Common myeloid progenitor, CD34-positive (primary cell): ENCODE measurements at regions of chr17 and their contacts with region 1.

Region 1: DNA sequence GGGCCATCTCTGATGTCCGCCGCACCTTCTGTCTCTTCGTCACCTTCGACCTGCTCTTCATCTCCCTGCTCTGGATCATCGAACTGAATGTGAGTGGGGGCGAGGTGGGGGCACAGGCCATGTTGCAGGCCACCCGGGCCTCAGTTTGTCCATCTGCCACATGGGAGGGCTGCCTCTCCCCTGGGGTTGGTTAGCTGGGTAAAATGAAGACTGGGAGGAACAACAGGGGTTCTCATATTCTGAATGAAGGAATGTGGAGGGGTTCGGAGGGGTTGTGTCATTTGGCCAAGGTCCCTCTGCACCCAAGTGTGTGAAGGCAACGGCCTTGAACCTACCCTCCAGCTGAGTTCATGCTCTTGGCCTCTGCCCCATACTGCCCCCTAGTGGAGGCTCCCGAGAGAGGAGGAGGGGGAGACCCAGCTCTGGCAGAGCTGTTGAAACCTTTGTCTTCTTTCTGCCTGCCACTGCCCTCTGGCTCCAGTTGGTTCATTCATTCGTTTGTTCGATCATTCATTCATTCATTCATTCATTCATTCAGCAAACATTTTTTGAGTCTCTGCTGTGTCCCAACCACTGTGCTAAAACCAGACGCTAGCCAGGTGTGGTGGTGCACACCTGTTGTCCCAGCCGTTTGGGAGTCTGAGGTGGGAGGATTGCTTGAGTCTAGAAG is 11.4 kb upstream of the TCAP start:
- DNase-seq: peak; percentile 63 to 78 (median 70)
- H3K4me3 ChIP-seq: no peak overlapping the region
- H3K27ac ChIP-seq: no peak overlapping the region
- H3K4me1 ChIP-seq: peaks cover 0 to 28% (median 16%) of the 10 kb centered on the region in 4 experiments
- H3K27me3 ChIP-seq: no peaks in the 10 kb centered on the region

Region 2: GRCh38 chr17:39628655-39629493 is 24.9 kb before region 1 on chr17:
- CTCF ChIA-PET with region 1: interaction called, 198 read pairs
- POLR2A ChIA-PET with region 1: no interaction called
- DNase-seq: no peak
- H3K4me3 ChIP-seq: no peak overlapping the region
- H3K27ac ChIP-seq: no peak overlapping the region
- H3K4me1 ChIP-seq: peaks cover 0 to 30% (median 27%) of the 10 kb centered on the region in 4 experiments
- H3K27me3 ChIP-seq: peaks cover 0 to 53% (median 22%) of the 10 kb centered on the region in 5 experiments

Region 3: GRCh38 chr17:39636927-39637736 is 16.7 kb before region 1 on chr17 and contains the start of gene STARD3:
- CTCF ChIA-PET with region 1: interaction called, 198 read pairs
- POLR2A ChIA-PET with region 1: interaction called, 6 read pairs
- DNase-seq: peak; percentile 89 to 93 (median 91)
- H3K4me3 ChIP-seq: peak within 1 kb of the TSS; percentile 71 to 91 (median 82)
- H3K27ac ChIP-seq: peak within 1 kb of the TSS; percentile 69 to 88
- H3K4me1 ChIP-seq: peaks cover 14 to 77% (median 65%) of the 10 kb centered on the region in 4 experiments
- H3K27me3 ChIP-seq: no peaks in the 10 kb centered on the region

Region 4: GRCh38 chr17:39668199-39668966 is 14.6 kb after region 1 on chr17 and contains the start of gene PNMT:
- CTCF ChIA-PET with region 1: interaction called, 155 read pairs
- POLR2A ChIA-PET with region 1: interaction called, 3 read pairs
- DNase-seq: peak; percentile 68 to 80 (median 75)
- H3K4me3 ChIP-seq: peak within 1 kb of the TSS in 5 of 7 experiments; percentile 17 to 63 (median 41)
- H3K27ac ChIP-seq: peak within 1 kb of the TSS in 1 of 2 experiments; percentile 43
- H3K4me1 ChIP-seq: peaks cover 0 to 56% (median 31%) of the 10 kb centered on the region in 4 experiments
- H3K27me3 ChIP-seq: peaks cover 0 to 31% (median 11%) of the 10 kb centered on the region in 5 experiments